Posterior vena cava (tissue), 2 donors: ENCODE measurements at regions of chr16 and their contacts with region 1.

Region 1: DNA sequence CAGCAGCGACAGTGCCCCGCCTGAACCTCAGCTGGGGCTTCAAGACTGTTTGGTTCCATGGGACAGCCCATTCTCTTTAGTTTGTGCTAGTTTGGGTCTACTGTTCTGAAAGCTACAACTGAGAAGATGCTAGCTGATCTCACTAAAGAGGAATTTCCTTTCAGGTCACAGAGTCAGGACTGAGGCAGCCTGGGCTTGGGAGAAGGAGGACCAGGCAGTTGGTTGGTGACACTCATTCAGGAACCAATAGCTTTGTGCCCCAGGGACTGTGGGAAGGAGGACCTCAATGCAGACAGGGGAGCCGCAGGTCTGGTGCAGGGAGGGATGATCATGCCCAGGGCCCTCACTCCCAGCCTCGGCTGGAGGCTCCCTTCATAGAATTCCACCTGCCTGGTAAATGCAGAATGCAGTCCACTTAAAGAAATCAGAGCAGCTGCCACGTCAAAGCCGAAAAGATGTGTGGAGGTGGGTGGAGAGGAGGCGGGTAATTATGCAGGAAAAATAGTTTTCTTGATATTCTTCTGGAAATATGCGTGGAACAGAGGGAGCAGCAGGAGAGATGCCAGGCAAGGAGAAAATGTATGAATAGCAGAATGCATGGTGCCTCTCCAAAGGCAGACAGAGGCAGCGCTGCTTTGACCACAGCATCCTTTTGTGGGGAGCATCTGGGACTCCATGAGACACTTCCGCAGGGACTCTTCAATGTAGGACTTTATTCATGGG is 32.6 kb upstream of the ZFP90 start:
- DNase-seq: no peak

Region 2: GRCh38 chr16:68396481-68396880 is 110.0 kb before region 1 on chr16:
- intact Hi-C with region 1: loop called in 1 of 2 experiments (anchors 5 kb)
- DNase-seq: no peak